GM10248 (cell line): ENCODE measurements at regions of chr1 and their contacts with region 1.

Region 1: GRCh38 chr1:20696397-20697329 is 21.1 kb downstream of the KIF17 start:
- DNase-seq: peak; percentile 90
- CTCF ChIP-seq: peak; percentile 85

Region 2: GRCh38 chr1:20521960-20522861 is 174.5 kb before region 1 on chr1:
- CTCF ChIA-PET with region 1: no interaction called
- POLR2A ChIA-PET with region 1: no interaction called
- DNase-seq: peak; percentile 65
- CTCF ChIP-seq: peak; percentile 95

Region 3: GRCh38 chr1:20574686-20575540 is 121.8 kb before region 1 on chr1:
- CTCF ChIA-PET with region 1: no interaction called
- POLR2A ChIA-PET with region 1: no interaction called
- DNase-seq: peak; percentile 82
- CTCF ChIP-seq: peak; percentile 59

Region 4: DNA sequence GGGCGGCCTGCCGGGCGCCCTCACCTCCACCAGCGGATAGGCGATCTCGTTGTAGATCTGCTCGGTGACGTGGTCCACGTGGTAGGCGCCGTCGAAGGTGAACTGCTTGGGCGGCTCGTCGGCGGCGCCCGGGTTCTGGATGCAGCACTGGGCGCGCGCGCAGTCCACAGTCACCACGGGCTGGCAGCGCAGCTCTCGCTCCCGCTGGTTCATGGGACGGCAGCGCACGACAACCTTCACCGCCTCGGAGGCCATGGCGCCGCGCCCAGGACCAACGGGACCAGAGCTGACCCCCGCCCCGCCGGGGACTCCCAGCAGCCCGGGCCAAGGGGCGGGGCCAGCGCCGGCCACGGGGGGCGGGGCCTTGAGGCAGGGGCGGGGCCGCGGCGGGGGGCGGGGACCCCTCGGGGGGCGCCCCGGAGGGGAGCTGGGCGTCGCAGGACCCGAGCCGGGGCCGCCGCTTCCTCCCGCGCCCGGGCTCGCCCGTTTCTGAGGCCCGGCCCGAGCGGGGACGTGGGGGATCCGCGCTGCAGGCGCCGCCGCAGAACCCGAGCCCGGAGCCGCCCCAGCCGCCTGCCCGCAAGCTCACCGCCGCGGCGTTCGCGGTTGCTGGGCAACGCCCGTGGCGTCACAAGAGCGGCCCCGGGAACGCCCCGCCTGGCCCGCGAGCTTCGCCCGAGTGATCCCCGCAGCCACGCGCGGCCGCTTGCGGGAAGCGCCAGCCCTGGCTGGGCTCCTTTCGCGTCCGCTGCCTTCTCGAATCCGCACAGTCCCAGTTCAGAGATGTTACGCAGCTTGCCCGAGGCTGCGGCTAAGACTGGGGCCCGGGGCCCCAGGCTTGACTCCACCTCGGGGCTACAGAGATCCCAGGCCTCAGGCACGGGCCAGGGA is 21.0 kb after region 1 on chr1 and contains the start of gene KIF17:
- CTCF ChIA-PET with region 1: interaction called, 41 read pairs
- POLR2A ChIA-PET with region 1: no interaction called
- DNase-seq: peak; percentile 83
- CTCF ChIP-seq: no peak

Region 5: DNA sequence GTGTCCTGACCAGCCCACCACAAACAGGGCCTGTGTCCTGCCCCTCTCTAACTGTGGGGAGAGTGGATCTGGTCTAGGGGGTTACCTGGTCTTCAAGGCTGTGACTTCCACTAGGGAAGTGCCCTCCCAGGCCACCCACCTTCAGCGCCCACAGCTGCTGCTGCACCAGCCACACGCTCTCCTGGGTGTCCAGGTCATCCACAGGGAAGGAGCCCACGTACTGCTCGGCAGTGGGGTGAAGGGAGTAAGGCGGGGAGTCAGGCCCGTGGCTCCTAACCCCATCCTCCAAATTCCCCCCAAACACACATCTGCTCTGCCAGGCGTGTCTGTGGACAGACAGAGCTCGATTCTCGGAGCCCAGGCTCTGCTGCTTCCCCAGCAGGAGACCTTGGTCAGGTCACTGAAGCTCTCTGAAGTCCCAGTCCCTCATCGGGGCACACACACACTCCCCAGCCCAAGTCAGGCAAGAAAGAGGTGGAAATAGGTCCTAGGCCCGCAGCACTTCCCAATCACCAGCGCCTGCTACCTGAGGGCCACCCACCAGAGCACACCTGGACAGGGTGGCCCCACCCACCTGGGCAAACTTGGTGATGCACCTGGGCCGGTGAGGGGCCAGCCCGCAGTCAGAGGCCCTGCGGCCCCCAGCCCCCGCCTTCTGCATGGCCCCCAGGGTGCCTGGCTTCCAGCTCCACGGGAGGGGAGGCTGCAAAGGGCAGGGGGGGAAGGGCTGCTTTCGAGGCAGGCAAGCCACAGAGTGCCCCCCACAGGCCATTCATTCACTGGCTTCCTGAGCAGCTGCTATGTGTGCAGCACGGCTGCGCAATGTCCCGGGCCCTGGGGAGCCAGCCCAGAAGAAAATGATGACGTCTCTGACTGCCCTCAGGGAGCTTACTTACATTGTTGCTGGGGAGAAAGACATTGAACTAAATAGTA is 31.0 kb after region 1 on chr1:
- CTCF ChIA-PET with region 1: interaction called, 24 read pairs
- POLR2A ChIA-PET with region 1: no interaction called
- DNase-seq: peak; percentile 21
- CTCF ChIP-seq: no peak

Region 6: GRCh38 chr1:20732588-20733360 is 36.1 kb after region 1 on chr1 and contains the start of gene SH2D5:
- CTCF ChIA-PET with region 1: interaction called, 24 read pairs
- POLR2A ChIA-PET with region 1: no interaction called
- DNase-seq: peak; percentile 77
- CTCF ChIP-seq: peak; percentile 31

Region 7: GRCh38 chr1:21189906-21190500 is 493.3 kb after region 1 on chr1:
- CTCF ChIA-PET with region 1: interaction called, 122 read pairs
- POLR2A ChIA-PET with region 1: no interaction called
- DNase-seq: no peak
- CTCF ChIP-seq: no peak